Activated CD4-positive, alpha-beta T cell treated with anti-CD3 and anti-CD28 coated beads, Interleukin-2, amount 10 ng/mL, durations not matched to agents 24 days and 14 days (primary cell): ENCODE measurements at regions of chr1 and their contacts with region 1.

Region 1: DNA sequence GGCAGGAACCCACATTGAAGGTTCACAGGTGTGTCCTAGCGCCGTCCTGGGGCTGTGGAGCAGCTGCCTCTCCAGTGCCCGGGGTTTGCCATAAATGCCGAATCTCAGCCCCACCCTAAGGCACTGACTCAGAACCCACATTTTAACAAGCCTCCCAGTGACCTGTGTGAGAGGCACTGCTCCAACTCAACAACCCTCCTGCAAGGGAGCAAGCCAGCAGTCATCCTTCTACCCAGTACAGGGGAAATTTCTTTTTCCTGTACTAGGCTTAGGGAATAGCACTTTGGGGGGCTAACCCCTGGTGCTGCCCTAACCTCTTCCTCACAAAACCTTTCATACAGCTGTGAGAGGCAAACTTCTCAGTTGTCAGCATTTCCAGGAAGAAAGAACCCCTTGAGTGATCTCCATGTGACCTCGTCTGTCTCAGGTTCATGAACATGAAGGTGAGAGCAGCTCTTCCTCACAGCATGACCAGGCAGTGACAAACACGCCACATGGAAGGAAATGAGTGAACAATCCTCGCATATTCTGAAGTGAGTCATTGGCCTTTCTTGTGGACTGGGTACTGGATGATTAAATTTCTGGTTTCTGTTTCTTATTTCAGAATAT is 11.4 kb upstream of the BCAR3 start:
- DNase-seq: peak; percentile 79
- H3K4me3 Mint-ChIP-seq: peak overlapping the region; percentile 37
- H3K27ac Mint-ChIP-seq: peak overlapping the region; percentile 81
- H3K4me1 Mint-ChIP-seq: peaks cover 11% of the 10 kb centered on the region
- H3K27me3 Mint-ChIP-seq: peaks cover 9% of the 10 kb centered on the region

Region 2: DNA sequence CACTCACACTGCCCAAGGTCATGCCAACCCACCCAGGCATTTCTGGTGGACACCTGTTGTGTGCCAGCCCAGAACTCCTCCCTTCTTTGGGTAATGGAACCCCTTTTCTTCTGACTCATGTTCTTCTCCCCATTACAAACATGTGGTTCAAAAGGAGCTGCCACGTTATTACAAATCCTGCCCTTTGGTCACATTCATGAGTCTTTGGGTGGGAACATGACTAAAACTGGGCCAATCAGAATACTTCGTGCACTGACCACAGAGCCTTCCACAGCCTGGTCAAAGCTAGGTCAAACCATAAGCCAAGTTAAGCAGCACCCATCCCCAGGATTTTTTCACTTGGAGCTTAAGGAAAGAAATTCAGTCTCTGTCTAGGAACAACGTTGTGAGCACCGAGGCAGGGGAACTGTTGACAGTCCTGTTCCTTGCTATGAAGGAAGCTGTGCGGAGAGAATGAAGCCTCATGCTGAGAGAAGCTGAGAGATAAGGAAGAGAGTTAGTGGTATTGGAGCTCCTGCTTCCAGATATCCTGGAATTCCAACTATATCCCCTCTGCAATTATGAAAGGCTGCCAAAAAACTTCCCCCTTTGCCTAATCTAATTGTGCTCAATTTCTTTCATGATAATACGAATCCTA is 685.0 kb before region 1 on chr1:
- intact Hi-C with region 1: no loop called
- DNase-seq: no peak
- H3K4me3 Mint-ChIP-seq: no peak overlapping the region
- H3K27ac Mint-ChIP-seq: no peak overlapping the region
- H3K4me1 Mint-ChIP-seq: peaks cover 2% of the 10 kb centered on the region
- H3K27me3 Mint-ChIP-seq: peaks cover 21% of the 10 kb centered on the region

Region 3: GRCh38 chr1:93607814-93608186 is 85.3 kb before region 1 on chr1:
- intact Hi-C with region 1: loop called (anchors 1 kb)
- DNase-seq: no peak
- H3K4me3 Mint-ChIP-seq: no peak overlapping the region
- H3K27ac Mint-ChIP-seq: peak overlapping the region; percentile 39
- H3K4me1 Mint-ChIP-seq: peaks cover 16% of the 10 kb centered on the region
- H3K27me3 Mint-ChIP-seq: peaks cover 51% of the 10 kb centered on the region

Region 4: DNA sequence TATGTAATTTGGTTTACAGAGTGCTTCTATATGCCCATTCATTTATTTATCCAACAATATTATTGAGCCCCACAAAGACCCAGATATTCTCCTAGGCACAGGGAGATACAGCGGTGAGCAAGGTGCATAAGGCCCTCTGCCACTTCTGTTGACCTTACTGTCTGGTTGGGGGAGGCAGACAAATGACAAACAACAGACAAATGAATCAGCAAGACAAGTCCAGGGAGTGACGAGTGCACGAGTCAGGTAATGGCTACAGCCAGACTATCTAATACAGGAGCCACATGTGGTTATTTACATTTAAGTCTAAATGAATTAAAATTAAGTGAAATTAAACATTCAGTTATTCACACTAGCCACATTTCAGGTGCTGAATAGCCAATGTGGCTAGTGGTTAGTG is 10.6 kb after region 1 on chr1:
- intact Hi-C with region 1: loop called (anchors 1 kb)
- DNase-seq: no peak
- H3K4me3 Mint-ChIP-seq: no peak overlapping the region
- H3K27ac Mint-ChIP-seq: no peak overlapping the region
- H3K4me1 Mint-ChIP-seq: peaks cover 23% of the 10 kb centered on the region
- H3K27me3 Mint-ChIP-seq: peaks cover 7% of the 10 kb centered on the region

Region 5: DNA sequence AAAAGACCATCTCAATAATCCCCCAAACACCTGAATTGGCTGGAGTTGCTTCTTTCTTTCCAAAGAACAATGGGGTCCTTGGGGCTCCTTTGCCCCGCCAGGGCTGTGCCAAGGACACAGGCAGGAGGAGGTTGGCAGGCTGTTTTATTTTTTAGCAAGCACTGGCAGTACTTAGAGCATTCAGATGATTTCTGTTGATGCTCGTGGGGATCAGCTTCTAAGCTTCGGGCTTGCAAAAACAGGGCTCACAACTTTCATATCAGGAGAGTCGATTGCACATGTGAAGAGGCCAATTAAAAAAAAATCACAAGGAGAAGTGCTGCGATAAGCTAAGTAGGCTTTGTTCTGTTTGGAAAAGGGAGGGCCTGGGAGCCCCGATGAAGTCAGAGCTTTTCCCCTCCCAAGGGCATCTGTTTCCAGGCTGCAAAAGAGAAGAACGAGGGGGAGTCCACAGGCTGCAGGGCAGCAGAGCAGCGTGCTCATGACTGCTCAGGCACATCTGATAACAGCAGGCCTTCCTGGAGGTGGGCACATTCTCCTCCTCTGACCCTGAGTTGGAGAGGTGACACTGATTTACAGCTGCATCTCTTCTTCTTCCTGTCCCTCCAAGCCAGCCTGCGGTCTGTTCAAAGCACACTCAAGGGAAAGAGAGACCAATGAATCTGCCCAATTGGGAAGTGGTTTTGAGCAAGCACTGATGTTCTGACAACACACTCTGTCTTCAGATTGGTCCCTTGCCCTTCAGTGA is 15.8 kb after region 1 on chr1:
- intact Hi-C with region 1: loop called (anchors 1 kb)
- DNase-seq: peak; percentile 66
- H3K4me3 Mint-ChIP-seq: peak overlapping the region; percentile 53
- H3K27ac Mint-ChIP-seq: no peak overlapping the region
- H3K4me1 Mint-ChIP-seq: peaks cover 48% of the 10 kb centered on the region
- H3K27me3 Mint-ChIP-seq: peaks cover 12% of the 10 kb centered on the region

Region 6: DNA sequence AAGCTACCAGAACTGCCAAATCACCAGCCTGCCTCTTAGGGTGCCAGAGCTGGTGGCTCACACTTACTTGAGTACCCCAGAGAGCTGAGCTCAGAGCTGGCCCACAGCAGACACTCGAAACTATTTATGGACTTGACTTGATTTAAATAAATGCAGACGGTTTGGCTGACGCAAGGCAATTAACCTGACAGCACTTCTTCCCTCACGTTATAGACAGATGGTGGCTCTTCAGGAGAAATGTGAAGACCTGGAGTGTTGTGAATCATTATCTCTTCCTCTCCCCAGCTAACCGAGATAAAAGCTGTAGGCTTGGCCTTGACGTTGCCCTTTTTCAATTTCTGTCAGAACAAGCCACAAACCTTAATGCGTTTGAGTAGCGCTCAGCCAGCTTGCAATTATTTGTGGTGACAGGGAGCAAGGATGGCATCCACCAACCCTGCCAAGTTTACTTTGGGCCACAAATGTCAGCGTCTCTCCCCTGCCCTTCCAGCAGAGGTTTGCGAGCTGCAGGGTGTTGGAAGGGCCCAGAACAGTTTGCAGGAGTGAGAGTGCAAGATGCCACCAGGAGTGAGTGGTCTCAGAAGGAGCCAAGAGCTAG is 22.5 kb after region 1 on chr1:
- intact Hi-C with region 1: loop called (anchors 1 kb)
- DNase-seq: peak; percentile 70
- H3K4me3 Mint-ChIP-seq: peak overlapping the region; percentile 39
- H3K27ac Mint-ChIP-seq: peak overlapping the region; percentile 72
- H3K4me1 Mint-ChIP-seq: peaks cover 46% of the 10 kb centered on the region
- H3K27me3 Mint-ChIP-seq: peaks cover 7% of the 10 kb centered on the region

Region 7: DNA sequence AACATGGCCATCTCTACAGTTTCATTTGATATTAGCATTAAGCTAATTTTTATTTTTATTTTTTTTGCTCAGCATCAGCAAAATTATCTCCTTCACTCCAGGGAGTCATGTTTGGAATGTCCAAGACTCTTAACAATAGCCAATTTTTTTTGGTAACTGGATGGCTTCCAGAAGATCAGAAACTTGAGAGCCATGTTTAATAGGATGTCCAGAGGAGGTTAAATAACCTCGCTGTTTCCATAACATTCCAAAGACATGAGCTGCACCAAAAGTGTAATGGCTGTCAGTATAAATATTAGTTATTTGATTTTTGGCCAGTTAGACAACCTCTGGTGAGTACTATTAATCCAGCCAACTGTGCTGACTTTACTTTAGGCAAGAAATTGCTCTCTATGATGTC is 105.2 kb after region 1 on chr1:
- intact Hi-C with region 1: no loop called
- DNase-seq: no peak
- H3K4me3 Mint-ChIP-seq: no peak overlapping the region
- H3K27ac Mint-ChIP-seq: no peak overlapping the region
- H3K4me1 Mint-ChIP-seq: no peaks in the 10 kb centered on the region
- H3K27me3 Mint-ChIP-seq: peaks cover 2% of the 10 kb centered on the region